ENCODE measurements at regions of chr3 and their contacts with region 1.

Region 1: GRCh38 chr3:4935347-4935746 is 43.9 kb upstream of the BHLHE40 start:
- DNase-seq: no peak
- ATAC-seq: no peak
- H3K4me3 ChIP-seq: no peak overlapping the region
- H3K4me3 Mint-ChIP-seq: no peak overlapping the region
- H3K27ac ChIP-seq: no peak overlapping the region
- H3K27ac Mint-ChIP-seq: no peak overlapping the region
- H3K4me1 ChIP-seq: no peaks in the 10 kb centered on the region
- H3K4me1 Mint-ChIP-seq: no peaks in the 10 kb centered on the region
- H3K27me3 ChIP-seq: no peaks in the 10 kb centered on the region
- H3K27me3 Mint-ChIP-seq: no peaks in the 10 kb centered on the region
- CTCF ChIP-seq: no peak

Region 2: DNA sequence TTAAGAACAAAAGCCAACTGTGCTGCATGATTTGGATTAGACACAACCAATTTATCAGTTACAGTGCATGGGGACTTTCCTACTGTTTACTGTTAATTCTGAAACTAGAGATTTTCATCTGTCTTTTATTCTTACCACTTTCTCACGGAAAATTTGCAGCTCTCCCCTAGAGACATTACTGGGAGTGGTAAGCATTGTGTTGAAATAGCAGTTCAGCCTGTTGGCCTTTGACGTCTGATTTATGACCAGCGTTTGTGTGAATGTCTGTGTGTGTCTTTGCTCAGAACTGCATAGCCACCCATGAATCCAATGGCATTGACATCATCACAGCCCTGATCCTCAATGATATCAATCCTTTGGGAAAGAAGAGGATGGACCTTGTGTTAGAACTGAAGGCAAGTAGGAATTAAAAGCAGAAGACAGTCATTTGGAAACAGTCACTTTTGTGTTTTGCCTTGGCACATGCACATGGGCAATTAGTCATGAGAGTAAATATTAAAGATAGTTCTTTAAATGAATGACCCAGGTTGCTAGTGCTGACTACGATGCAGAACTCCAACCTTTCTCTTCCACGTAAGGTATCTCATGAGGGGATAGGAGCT is 158.3 kb before region 1 on chr3:
- CTCF ChIA-PET with region 1: no interaction called
- POLR2A ChIA-PET with region 1: no interaction called
- intact Hi-C with region 1: no loop called
- DNase-seq: no peak
- ATAC-seq: no peak
- H3K4me3 ChIP-seq: no peak overlapping the region
- H3K4me3 Mint-ChIP-seq: no peak overlapping the region
- H3K27ac ChIP-seq: no peak overlapping the region
- H3K27ac Mint-ChIP-seq: no peak overlapping the region
- H3K4me1 ChIP-seq: no peaks in the 10 kb centered on the region
- H3K4me1 Mint-ChIP-seq: no peaks in the 10 kb centered on the region
- H3K27me3 ChIP-seq: no peaks in the 10 kb centered on the region
- H3K27me3 Mint-ChIP-seq: no peaks in the 10 kb centered on the region
- CTCF ChIP-seq: no peak

Region 3: DNA sequence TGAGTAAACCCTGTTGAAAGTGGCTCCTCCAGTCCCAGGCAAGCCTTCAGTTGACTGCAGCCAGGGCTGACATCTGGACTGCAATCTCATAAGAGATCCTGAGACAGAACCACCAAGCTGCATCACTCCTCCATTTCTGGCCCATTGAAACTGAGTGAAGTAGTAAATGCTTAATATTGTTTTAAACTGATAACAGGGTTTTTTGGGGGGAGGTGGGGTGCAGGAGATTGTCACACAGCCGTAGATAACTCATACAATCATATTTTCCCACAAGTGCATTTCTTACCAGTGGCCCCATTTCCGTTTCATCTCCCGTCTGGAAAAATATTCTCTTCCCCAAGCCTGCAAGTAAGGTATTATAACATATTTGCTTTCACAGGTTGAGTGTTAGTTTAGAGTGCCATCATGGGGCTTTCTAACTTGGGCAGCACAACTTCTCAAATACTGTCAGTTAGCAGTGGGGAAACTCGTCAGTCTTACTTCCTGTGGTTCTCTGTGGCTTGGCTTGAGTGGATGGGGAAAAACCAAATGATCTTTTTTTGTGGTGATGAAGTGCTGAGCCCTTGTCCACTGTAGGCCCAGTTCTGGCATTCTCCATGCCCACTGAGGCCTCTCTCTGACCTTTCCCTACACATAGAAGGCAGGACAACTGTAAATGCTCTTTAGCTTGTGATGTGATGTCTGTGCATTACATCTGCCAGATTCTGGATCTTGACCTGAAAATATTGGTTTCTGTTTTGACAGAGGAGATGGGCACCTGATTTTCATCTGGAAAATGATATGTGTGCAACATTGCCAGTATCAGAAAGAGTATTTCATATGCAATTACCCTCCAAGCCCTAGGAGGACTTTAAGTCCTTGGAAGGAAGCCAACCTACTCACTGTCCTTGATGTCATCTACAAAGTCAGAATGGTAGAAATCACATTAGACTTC is 46.2 kb before region 1 on chr3:
- CTCF ChIA-PET with region 1: interaction called, 3 read pairs
- POLR2A ChIA-PET with region 1: no interaction called
- intact Hi-C with region 1: loop called in 1 of 2 experiments (anchors 10 kb)
- DNase-seq: peak in 5 of 14 experiments; percentile 13 to 73 (median 68)
- ATAC-seq: peak; percentile 66
- H3K4me3 ChIP-seq: no peak overlapping the region
- H3K4me3 Mint-ChIP-seq: no peak overlapping the region
- H3K27ac ChIP-seq: no peak overlapping the region
- H3K27ac Mint-ChIP-seq: peak overlapping the region; percentile 39
- H3K4me1 ChIP-seq: peaks cover 19% of the 10 kb centered on the region
- H3K4me1 Mint-ChIP-seq: peaks cover 16% of the 10 kb centered on the region
- H3K27me3 ChIP-seq: no peaks in the 10 kb centered on the region
- H3K27me3 Mint-ChIP-seq: no peaks in the 10 kb centered on the region
- CTCF ChIP-seq: no peak